ENCODE measurements at regions of chr12 and their contacts with region 1.

Region 1: GRCh38 chr12:26088993-26089392 is 35.8 kb downstream of the BHLHE41 start:
- DNase-seq: no peak
- H3K4me3 ChIP-seq: no peak overlapping the region
- H3K27ac ChIP-seq: no peak overlapping the region
- H3K4me1 ChIP-seq: peaks cover 29% of the 10 kb centered on the region
- H3K27me3 ChIP-seq: no peaks in the 10 kb centered on the region
- CTCF ChIP-seq: no peak

Region 2: GRCh38 chr12:25458047-25458552 is 630.9 kb before region 1 on chr12:
- CTCF ChIA-PET with region 1: no interaction called
- POLR2A ChIA-PET with region 1: no interaction called
- intact Hi-C with region 1: loop called (anchors 1 kb)
- DNase-seq: peak; percentile 63 to 89
- H3K4me3 ChIP-seq: peak overlapping the region; percentile 24; the same call in 1 of the 2 replicates
- H3K27ac ChIP-seq: peak overlapping the region; percentile 67
- H3K4me1 ChIP-seq: peaks cover 22% of the 10 kb centered on the region
- H3K27me3 ChIP-seq: no peaks in the 10 kb centered on the region
- CTCF ChIP-seq: no peak

Region 3: GRCh38 chr12:26044012-26044383 is 45.0 kb before region 1 on chr12:
- CTCF ChIA-PET with region 1: no interaction called
- POLR2A ChIA-PET with region 1: interaction called, 29 read pairs
- intact Hi-C with region 1: loop called (anchors 2 kb)
- DNase-seq: no peak
- H3K4me3 ChIP-seq: no peak overlapping the region
- H3K27ac ChIP-seq: no peak overlapping the region
- H3K4me1 ChIP-seq: peaks cover 23% of the 10 kb centered on the region
- H3K27me3 ChIP-seq: no peaks in the 10 kb centered on the region
- CTCF ChIP-seq: no peak

Region 4: GRCh38 chr12:26195641-26196420 is 106.8 kb after region 1 on chr12:
- CTCF ChIA-PET with region 1: interaction called, 11 read pairs
- POLR2A ChIA-PET with region 1: no interaction called
- intact Hi-C with region 1: no loop called
- DNase-seq: peak in 1 of 2 experiments; percentile 46
- H3K4me3 ChIP-seq: peak overlapping the region; percentile 79
- H3K27ac ChIP-seq: peak overlapping the region; percentile 38
- H3K4me1 ChIP-seq: peaks cover 34% of the 10 kb centered on the region
- H3K27me3 ChIP-seq: no peaks in the 10 kb centered on the region
- CTCF ChIP-seq: no peak